H1 (cell line): ENCODE measurements at regions of chr5 and their contacts with region 1.

Region 1: DNA sequence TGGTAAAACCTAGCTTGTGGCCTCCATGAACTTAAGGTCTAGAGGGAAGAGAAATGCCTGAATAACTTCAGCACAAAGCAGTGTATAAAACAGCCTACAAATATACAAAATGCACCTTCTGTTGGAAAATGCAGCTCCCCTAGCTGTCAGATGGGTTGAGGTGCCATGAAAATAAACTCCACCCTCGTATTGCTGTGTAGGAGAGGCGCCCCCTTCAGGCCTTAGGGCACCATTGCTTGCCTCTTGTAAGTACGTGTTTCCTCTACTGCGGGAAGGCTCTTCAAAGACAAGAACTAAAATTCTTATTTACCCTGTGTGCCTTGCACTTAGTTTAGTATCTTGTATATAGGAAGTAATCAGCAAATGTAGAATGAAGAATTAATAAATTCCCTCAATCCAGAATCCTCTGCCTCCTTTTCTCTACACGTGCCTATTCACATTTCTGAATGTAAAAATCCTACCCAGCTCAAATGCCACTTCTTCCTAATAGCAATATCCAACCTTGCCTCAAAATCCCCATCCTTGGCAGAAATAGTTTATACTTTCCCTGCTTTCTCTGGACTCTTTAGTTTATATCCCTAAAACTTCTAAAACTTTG is 393.7 kb upstream of the PDE4D start:
- DNase-seq: peak; percentile 47 to 68
- H3K4me3 ChIP-seq: no peak overlapping the region
- H3K27ac ChIP-seq: no peak overlapping the region
- H3K4me1 ChIP-seq: no peaks in the 10 kb centered on the region
- H3K27me3 ChIP-seq: peaks cover 0 to 1% (median 0%) of the 10 kb centered on the region in 4 experiments; a peak in 1 of 7 replicates
- CTCF ChIP-seq: peak; percentile 85 to 99 (median 98)
- EP300 ChIP-seq: no peak
- POLR2A ChIP-seq: no peak
- RAD21 ChIP-seq: peak; percentile 89 to 91

Region 2: GRCh38 chr5:59923465-59923864 is 363.8 kb before region 1 on chr5:
- CTCF ChIA-PET with region 1: interaction called, 10 read pairs
- POLR2A ChIA-PET with region 1: no interaction called
- DNase-seq: no peak
- H3K4me3 ChIP-seq: no peak overlapping the region
- H3K27ac ChIP-seq: no peak overlapping the region
- H3K4me1 ChIP-seq: peaks cover 0 to 5% (median 4%) of the 10 kb centered on the region in 4 experiments; a peak in 4 of 7 replicates
- H3K27me3 ChIP-seq: no peaks in the 10 kb centered on the region; a peak in 3 of 7 replicates
- CTCF ChIP-seq: peak; percentile 20 to 65 (median 44)
- EP300 ChIP-seq: no peak
- POLR2A ChIP-seq: no peak
- RAD21 ChIP-seq: peak; percentile 83 to 85

Region 3: DNA sequence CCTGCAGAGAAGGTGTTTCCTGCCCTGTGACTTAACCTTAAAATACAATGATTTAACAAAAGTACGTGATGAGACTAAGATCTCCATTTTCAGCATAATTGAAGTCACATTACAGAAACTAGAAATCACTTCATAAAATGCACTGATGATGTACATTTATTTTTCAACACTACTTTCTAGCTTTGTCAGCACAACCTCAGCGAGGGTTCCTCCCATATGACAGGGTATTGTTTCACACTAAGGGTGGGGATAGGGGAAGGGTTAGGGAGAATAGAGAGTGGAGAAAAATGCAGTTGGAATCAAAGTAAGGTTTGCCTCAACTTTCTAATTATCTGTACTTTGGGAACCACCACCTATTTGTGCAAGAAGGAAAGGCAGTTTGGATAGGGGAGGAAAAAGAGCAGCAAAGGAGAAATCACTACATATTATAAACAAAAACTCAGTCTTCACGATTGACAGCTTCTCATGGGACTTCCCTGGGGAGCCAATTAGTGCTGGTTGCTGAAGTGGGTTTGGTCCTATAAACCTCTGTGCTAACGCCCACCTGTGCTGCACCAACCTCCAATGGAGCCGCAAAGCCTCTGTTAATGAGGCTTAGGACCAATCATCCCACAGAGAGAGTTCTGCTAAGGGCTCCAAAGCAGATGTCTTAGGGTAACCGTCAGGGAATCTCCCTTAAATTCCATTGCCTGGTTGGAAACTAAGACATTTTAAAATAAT is 24.5 kb before region 1 on chr5:
- CTCF ChIA-PET with region 1: interaction called, 11 read pairs
- POLR2A ChIA-PET with region 1: no interaction called
- DNase-seq: no peak
- H3K4me3 ChIP-seq: no peak overlapping the region
- H3K27ac ChIP-seq: no peak overlapping the region
- H3K4me1 ChIP-seq: no peaks in the 10 kb centered on the region
- H3K27me3 ChIP-seq: no peaks in the 10 kb centered on the region
- CTCF ChIP-seq: no peak
- EP300 ChIP-seq: no peak
- POLR2A ChIP-seq: no peak
- RAD21 ChIP-seq: no peak

Region 4: GRCh38 chr5:60274747-60275146 is 12.5 kb before region 1 on chr5:
- CTCF ChIA-PET with region 1: interaction called, 29 read pairs
- POLR2A ChIA-PET with region 1: no interaction called
- DNase-seq: no peak
- H3K4me3 ChIP-seq: no peak overlapping the region
- H3K27ac ChIP-seq: no peak overlapping the region
- H3K4me1 ChIP-seq: no peaks in the 10 kb centered on the region
- H3K27me3 ChIP-seq: no peaks in the 10 kb centered on the region
- CTCF ChIP-seq: no peak
- EP300 ChIP-seq: no peak
- POLR2A ChIP-seq: no peak
- RAD21 ChIP-seq: no peak